ENCODE measurements at regions of chr10 and their contacts with region 1.

Region 1: DNA sequence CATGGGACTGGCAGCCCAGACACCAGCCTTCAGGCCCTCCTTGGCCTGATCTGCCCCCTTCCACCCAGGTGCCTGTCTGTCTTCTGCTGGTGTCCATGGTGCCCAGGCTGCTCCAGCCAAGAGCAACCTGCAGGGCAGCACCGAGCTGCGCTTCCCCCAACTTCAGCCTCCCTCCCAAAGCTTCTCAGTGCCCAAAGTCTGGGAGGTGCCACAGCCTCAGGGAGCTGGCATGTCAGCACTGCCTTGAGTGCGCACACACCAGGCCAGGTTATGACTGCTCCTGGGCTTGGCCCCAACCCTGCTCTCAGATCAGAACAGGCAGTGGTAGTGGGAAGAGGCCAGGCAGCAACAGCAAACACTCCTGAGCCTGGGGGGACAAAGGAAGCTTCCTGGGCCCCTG is 304.6 kb upstream of the NRG3 start:
- DNase-seq: no peak
- ATAC-seq: no peak
- H3K4me3 ChIP-seq: no peak overlapping the region
- H3K27ac ChIP-seq: no peak overlapping the region
- H3K4me1 ChIP-seq: no peaks in the 10 kb centered on the region
- H3K27me3 ChIP-seq: no peaks in the 10 kb centered on the region
- CTCF ChIP-seq: no peak

Region 2: DNA sequence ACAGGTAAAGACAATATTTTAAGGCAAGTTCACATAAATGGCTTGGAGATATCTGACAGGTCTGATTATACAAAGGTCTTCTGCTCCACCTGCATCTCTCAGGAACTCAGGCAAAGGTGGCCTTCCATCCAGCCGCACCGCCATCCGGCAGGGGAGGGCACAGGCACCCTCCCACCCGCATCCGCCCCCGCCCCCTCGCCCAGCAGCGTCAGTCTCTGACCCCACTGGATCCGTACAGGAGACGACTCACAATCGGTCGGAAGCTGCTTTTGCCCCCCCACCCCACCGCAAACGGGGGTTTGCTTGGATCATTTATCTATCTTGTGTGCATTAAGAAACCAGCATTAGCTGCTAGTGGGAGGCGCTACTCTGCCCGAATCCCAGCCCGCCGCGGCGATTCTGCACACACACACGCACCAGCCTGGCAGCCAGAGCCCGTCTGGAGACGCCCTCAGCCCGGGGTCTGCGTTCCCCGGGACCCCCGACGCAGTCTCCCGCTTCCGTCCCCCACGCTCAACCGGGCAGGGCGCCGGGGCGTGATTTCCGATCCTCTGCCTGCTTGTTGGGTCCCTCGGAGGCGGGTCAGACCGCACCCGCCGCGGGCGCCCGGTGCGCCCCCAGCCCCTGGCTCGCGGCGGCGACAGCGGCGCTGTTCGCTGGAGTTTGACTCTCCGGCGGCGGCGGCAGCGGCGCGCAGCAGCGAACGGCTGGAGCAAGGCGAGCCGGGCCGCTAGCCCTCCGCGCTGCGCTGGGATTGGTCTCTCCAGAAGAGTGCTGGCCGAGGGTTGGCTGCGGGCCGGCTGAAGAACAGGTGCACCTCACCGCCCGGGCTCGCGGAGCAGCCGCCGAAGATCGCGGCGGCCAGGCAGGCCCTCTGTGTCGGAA is 303.8 kb after region 1 on chr10:
- CTCF ChIA-PET with region 1: no interaction called
- POLR2A ChIA-PET with region 1: interaction called, 11 read pairs
- in situ Hi-C with region 1: no loop called
- intact Hi-C with region 1: no loop called
- DNase-seq: no peak
- ATAC-seq: peak; percentile 85
- H3K4me3 ChIP-seq: peak overlapping the region; percentile 27 to 30; a peak in 3 of 4 replicates
- H3K27ac ChIP-seq: no peak overlapping the region
- H3K4me1 ChIP-seq: no peaks in the 10 kb centered on the region
- H3K27me3 ChIP-seq: peaks cover 44% of the 10 kb centered on the region
- CTCF ChIP-seq: peak; percentile 21; the same call in 1 of the 2 replicates